Stomach (tissue), 19 donors: ENCODE measurements at regions of chr22 and their contacts with region 1.

Region 1: GRCh38 chr22:21816787-21817496 is 50.5 kb downstream of the MAPK1 start:
- DNase-seq: peak in 1 of 2 donors; percentile 91
- H3K4me3 ChIP-seq: peak overlapping the region in 2 of 4 donors; percentile 0 to 18
- H3K27ac ChIP-seq: peak overlapping the region; percentile 16 to 84 (median 70)
- H3K4me1 ChIP-seq: peaks cover 37 to 83% (median 58%) of the 10 kb centered on the region in 4 donors
- H3K27me3 ChIP-seq: no peaks in the 10 kb centered on the region
- CTCF ChIP-seq: no peak
- EP300 ChIP-seq: no peak
- POLR2A ChIP-seq: no peak

Region 2: GRCh38 chr22:21760640-21761039 is 56.3 kb before region 1 on chr22:
- intact Hi-C with region 1: no loop called
- DNase-seq: no peak
- H3K4me3 ChIP-seq: no peak overlapping the region
- H3K27ac ChIP-seq: no peak overlapping the region
- H3K4me1 ChIP-seq: peaks cover 4 to 18% (median 6%) of the 10 kb centered on the region in 4 donors
- H3K27me3 ChIP-seq: no peaks in the 10 kb centered on the region
- CTCF ChIP-seq: no peak
- EP300 ChIP-seq: no peak
- POLR2A ChIP-seq: no peak

Region 3: DNA sequence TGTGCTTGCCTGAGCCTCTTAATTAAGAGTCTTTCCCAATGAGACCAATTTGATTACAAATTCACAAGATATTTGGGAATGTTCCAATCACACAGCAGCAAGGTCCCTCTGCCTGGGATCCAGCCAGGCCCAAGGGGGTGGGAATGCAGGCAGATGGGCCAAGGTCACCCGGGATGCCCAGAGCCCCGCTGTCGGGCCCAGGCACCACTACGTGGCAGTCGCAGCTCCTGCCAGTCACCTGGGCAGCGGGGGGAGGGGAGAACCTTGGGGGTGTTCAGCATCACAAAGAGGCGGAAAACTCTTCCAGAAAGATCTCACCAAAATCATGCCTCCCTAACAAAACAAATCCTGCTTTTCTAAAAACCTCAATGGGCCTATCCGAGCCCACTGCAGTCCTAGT is 104.8 kb after region 1 on chr22:
- intact Hi-C with region 1: loop called (anchors 5 kb)
- DNase-seq: no peak
- H3K4me3 ChIP-seq: no peak overlapping the region
- H3K27ac ChIP-seq: no peak overlapping the region
- H3K4me1 ChIP-seq: peaks cover 0 to 10% (median 6%) of the 10 kb centered on the region in 4 donors
- H3K27me3 ChIP-seq: no peaks in the 10 kb centered on the region
- CTCF ChIP-seq: no peak
- EP300 ChIP-seq: no peak
- POLR2A ChIP-seq: no peak